Activated CD8-positive, alpha-beta T cell treated with anti-CD3 and anti-CD28 coated beads for 36 hours (primary cell): ENCODE measurements at regions of chr1 and their contacts with region 1.

Region 1: DNA sequence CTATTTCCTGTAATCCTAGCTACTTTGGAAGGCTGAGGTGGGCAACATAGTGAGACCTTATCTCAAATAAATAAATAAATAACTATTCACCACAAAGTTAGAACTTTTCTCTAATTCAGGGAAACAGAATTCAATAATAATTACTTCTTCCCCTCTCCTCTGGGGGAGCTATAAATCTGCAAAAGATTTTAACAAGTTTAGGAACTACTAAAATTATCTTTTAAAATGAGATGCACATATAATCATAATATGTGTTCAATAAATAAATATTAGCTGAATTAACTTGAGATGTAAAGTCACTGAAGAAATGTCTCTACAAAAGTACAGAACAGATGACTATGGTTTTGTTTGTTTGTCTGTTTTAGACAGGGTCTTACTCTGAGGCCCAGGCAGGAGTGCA is 14.1 kb downstream of the WDR47 start:
- DNase-seq: no peak
- ATAC-seq: no peak
- H3K4me3 Mint-ChIP-seq: no peak overlapping the region
- H3K27ac Mint-ChIP-seq: no peak overlapping the region
- H3K4me1 Mint-ChIP-seq: peaks cover 2% of the 10 kb centered on the region
- H3K27me3 Mint-ChIP-seq: no peaks in the 10 kb centered on the region
- CTCF ChIP-seq: no peak

Region 2: DNA sequence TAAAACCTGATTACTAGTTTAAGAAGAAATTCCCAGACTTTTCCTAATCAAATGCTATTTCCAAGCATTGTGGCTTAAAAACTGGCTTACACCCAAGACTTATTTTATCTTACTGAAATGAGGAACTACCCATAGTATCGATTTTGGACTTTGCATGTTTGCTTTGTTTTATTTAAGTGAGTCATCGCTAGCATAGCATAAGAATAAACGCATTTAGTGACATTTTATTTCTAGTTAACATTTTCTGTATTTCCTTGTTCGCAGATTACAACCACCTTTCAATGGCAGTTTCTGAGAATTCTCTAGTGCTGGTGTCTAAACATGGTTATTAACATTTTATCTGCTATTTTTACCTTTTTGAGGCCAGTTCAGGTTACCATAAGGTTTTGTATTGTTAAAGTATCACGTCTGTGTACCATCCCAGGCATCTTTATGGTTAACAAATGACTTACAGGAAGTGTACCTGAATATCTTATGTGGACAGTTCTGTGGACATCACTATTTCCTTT is 443.4 kb before region 1 on chr1:
- CTCF ChIA-PET with region 1: no interaction called
- POLR2A ChIA-PET with region 1: no interaction called
- intact Hi-C with region 1: no loop called
- DNase-seq: no peak
- ATAC-seq: peak; percentile 34
- H3K4me3 Mint-ChIP-seq: no peak overlapping the region
- H3K27ac Mint-ChIP-seq: peak overlapping the region; percentile 44
- H3K4me1 Mint-ChIP-seq: peaks cover 49% of the 10 kb centered on the region
- H3K27me3 Mint-ChIP-seq: no peaks in the 10 kb centered on the region
- CTCF ChIP-seq: no peak

Region 3: GRCh38 chr1:109041621-109042468 is 14.0 kb after region 1 on chr1 and contains the start of gene WDR47:
- CTCF ChIA-PET with region 1: interaction called, 12 read pairs
- POLR2A ChIA-PET with region 1: interaction called, 3 read pairs
- intact Hi-C with region 1: no loop called
- DNase-seq: peak; percentile 97
- ATAC-seq: peak; percentile 99
- H3K4me3 Mint-ChIP-seq: peak within 1 kb of the TSS; percentile 84
- H3K27ac Mint-ChIP-seq: peak within 1 kb of the TSS; percentile 75
- H3K4me1 Mint-ChIP-seq: peaks cover 12% of the 10 kb centered on the region
- H3K27me3 Mint-ChIP-seq: no peaks in the 10 kb centered on the region
- CTCF ChIP-seq: no peak
- total RNA-seq, gene WDR47: 7.2 to 8.4 TPM